Activated CD4-positive, alpha-beta T cell treated with anti-CD3 and anti-CD28 coated beads for 36 hours (primary cell): ENCODE measurements at regions of chr9 and their contacts with region 1.

Region 1: DNA sequence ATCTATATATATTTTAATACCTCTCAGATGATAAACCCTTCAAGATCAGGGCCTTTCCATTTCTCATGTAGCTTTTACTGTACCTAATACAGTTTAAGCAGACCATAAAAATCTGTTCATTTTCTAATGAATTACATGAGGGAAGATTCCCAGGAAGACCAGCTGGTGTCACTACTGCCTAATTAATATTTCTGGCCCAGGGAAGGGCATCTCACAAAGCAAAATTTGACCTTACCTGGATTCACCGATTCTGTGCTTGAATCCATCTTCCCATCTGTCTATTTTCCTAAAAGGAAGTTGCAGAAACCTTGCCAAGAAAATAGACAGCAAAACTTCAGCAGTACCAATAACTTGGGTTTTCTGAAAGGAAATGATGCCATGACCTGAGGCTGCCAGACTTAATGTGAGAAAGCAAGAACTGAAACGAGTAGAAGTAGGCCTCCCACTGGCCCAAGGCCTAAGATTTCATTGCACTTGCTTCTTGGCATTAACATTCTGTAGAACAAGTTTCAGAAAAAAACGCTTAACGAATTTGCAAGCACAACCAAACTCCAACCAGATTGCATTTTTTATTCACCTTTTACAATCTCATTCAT is 83.0 kb upstream of the GLIS3 start:
- DNase-seq: peak; percentile 14
- ATAC-seq: no peak
- H3K4me3 Mint-ChIP-seq: no peak overlapping the region
- H3K27ac Mint-ChIP-seq: no peak overlapping the region
- H3K4me1 Mint-ChIP-seq: peaks cover 2% of the 10 kb centered on the region
- H3K27me3 Mint-ChIP-seq: no peaks in the 10 kb centered on the region

Region 2: DNA sequence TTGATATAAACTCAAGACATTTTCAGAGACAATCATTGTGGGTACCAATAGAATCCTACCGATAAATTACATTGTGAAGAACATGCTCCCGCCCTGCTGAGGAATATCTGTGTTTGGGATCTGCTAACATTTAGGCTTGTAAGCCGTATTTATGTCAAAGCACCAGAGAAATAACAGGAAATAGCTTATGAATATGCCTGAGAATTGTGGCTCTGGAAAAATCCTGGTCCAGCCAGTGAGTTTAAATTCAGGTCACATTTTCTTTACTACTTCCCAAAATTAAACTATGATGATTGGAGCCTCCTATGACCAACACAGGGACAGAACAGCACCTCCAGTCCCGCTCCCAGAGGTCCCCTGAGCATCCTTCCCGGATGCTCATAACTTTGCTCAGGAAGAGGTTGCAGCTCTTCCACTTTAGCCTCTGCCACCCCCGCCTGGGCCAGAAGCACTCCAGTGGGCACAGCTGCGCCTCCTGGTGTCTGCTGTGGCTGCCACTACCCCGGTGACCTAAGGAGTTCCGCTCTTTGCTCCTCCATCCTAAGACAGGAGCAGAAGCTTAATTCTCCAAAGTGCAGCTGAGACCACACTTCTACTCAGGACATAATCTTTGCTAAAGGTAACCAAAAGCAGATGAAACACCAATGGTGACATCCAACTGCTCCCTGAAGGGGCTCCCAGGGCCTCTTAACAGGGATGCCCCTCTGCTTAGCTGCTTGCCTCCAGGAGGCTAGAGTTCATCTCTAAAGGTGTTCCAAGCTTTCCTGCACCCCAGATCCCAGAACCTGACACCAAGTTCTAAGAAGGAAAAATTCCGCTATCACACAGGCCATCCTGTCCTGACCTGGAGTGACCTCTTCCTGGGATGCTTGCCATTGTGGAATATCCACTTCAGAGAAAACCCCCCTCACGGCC is 166.2 kb after region 1 on chr9:
- CTCF ChIA-PET with region 1: no interaction called
- POLR2A ChIA-PET with region 1: no interaction called
- intact Hi-C with region 1: loop called in 1 of 2 experiments (anchors 5 kb)
- DNase-seq: peak; percentile 33
- ATAC-seq: no peak
- H3K4me3 Mint-ChIP-seq: no peak overlapping the region
- H3K27ac Mint-ChIP-seq: no peak overlapping the region
- H3K4me1 Mint-ChIP-seq: peaks cover 56% of the 10 kb centered on the region
- H3K27me3 Mint-ChIP-seq: no peaks in the 10 kb centered on the region

Region 3: GRCh38 chr9:4640027-4640426 is 257.2 kb after region 1 on chr9:
- CTCF ChIA-PET with region 1: interaction called, 12 read pairs
- POLR2A ChIA-PET with region 1: no interaction called
- intact Hi-C with region 1: loop called (anchors 2 to 5 kb)
- DNase-seq: peak; percentile 64
- ATAC-seq: no peak
- H3K4me3 Mint-ChIP-seq: no peak overlapping the region
- H3K27ac Mint-ChIP-seq: no peak overlapping the region
- H3K4me1 Mint-ChIP-seq: peaks cover 5% of the 10 kb centered on the region
- H3K27me3 Mint-ChIP-seq: no peaks in the 10 kb centered on the region

Region 4: DNA sequence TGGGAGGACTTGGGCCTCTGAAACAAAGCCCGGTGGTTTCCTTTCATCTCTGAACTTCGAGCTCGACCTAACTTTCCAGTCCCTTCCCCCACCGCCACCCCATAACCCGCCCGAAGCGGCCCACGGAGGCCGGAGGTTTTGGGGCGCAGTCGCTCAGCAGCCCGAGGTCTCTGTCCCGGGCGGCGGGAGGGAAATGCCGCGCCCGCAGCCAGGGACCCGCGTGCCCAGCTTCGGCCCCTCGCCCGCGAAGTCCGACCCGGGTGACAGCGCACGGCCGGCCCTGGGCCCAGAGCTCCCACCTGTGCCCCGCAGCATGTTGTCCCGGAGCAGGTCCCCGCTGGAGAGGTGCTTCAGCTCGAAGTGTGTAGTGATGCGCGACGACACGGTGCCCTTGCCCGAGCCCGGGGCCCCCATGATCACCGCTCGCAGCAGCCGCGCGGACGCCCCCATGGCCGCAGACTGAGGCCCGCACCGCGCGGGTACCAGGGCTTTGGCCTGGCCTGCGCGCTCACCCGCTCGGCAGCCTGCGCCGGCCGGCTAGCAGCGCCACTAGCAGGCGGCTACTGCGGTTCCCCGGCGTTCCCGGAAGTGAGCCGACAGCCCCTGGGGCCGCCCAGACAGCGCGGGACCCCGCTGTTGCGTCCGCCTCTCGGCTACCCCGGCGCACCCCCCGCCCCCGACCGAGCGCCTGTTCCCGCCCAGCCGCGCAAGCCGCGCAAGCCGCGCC is 358.0 kb after region 1 on chr9 and contains the start of gene AK3:
- CTCF ChIA-PET with region 1: no interaction called
- POLR2A ChIA-PET with region 1: no interaction called
- intact Hi-C with region 1: loop called (anchors 10 kb)
- DNase-seq: peak; percentile 91
- ATAC-seq: peak; percentile 87
- H3K4me3 Mint-ChIP-seq: peak within 1 kb of the TSS; percentile 88
- H3K27ac Mint-ChIP-seq: peak within 1 kb of the TSS; percentile 93
- H3K4me1 Mint-ChIP-seq: peaks cover 40% of the 10 kb centered on the region
- H3K27me3 Mint-ChIP-seq: no peaks in the 10 kb centered on the region
- total RNA-seq, gene AK3: 32.6 to 41.0 TPM